PC-3 (cell line): ENCODE measurements at regions of chr14 and their contacts with region 1.

Region 1: GRCh38 chr14:35826218-35826951 is at the start of gene BRMS1L:
- DNase-seq: peak; percentile 99
- ATAC-seq: peak; percentile 90
- H3K4me3 ChIP-seq: peak within 1 kb of the TSS; percentile 91
- H3K27ac ChIP-seq: peak within 1 kb of the TSS; percentile 81
- H3K4me1 ChIP-seq: peaks cover 7% of the 10 kb centered on the region; the same call in 1 of the 2 replicates
- H3K27me3 ChIP-seq: no peaks in the 10 kb centered on the region
- CTCF ChIP-seq: no peak
- total RNA-seq, gene BRMS1L: 4.8 and 10.3 TPM in 2 replicates

Region 2: GRCh38 chr14:34875031-34875922 is 951.1 kb before region 1 on chr14 and contains the start of gene BAZ1A:
- CTCF ChIA-PET with region 1: no interaction called
- POLR2A ChIA-PET with region 1: interaction called, 10 read pairs
- intact Hi-C with region 1: no loop called
- DNase-seq: peak; percentile 93
- ATAC-seq: peak; percentile 69
- H3K4me3 ChIP-seq: peak within 1 kb of the TSS; percentile 71
- H3K27ac ChIP-seq: peak within 1 kb of the TSS; percentile 94
- H3K4me1 ChIP-seq: peaks cover 19% of the 10 kb centered on the region
- H3K27me3 ChIP-seq: no peaks in the 10 kb centered on the region
- CTCF ChIP-seq: no peak
- total RNA-seq, gene BAZ1A: 24.7 and 30.6 TPM in 2 replicates

Region 3: DNA sequence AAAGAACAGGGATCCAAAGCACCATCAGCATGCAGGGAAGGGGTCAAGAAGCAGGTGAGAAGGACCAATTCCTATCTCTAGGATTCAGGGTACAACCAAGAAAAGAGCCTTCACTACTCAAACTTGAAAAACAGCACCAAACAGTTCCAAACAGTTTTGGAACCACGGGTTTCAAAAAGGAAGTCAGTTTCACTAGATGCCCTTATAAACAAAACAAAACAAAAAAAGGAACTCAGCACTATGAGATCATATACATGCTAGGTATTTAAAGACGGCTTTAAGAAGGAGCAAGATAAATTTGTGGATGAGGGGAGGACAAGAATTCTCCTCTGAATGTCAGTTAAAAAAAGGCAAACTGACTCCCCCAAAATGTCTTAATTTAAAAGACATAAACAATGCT is 286.4 kb before region 1 on chr14:
- CTCF ChIA-PET with region 1: interaction called, 10 read pairs
- POLR2A ChIA-PET with region 1: no interaction called
- intact Hi-C with region 1: no loop called
- DNase-seq: no peak
- ATAC-seq: no peak
- H3K4me3 ChIP-seq: no peak overlapping the region
- H3K27ac ChIP-seq: no peak overlapping the region
- H3K4me1 ChIP-seq: 0 out of 2 replicates have a peak, but pooled peaks cover 7% of the 10 kb centered on the region
- H3K27me3 ChIP-seq: peaks cover 2% of the 10 kb centered on the region
- CTCF ChIP-seq: no peak

Region 4: DNA sequence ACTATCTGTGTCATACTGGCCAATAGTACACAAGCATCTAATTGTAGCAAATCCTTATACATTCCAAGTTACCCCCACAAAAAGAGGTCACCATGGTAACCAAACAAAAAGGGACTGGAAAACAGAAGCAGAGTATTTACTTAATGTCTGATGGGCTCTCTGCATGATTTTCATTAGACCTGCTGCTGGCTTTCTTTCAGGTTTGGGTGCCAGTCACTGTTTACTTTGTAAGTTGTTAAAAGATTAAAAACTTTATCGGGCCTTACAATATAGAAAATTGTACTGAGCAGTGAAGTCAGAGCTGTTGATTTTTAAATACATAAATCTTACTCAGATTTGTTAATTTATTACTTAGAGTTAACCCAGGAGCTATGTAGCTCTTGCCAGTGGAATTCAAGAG is 123.6 kb after region 1 on chr14:
- CTCF ChIA-PET with region 1: no interaction called
- POLR2A ChIA-PET with region 1: no interaction called
- intact Hi-C with region 1: loop called (anchors 5 kb)
- DNase-seq: peak; percentile 61
- ATAC-seq: peak; percentile 53
- H3K4me3 ChIP-seq: no peak overlapping the region
- H3K27ac ChIP-seq: no peak overlapping the region
- H3K4me1 ChIP-seq: peaks cover 17% of the 10 kb centered on the region
- H3K27me3 ChIP-seq: peaks cover 9% of the 10 kb centered on the region
- CTCF ChIP-seq: no peak